Panc1 (cell line): ENCODE measurements at regions of chr7 and their contacts with region 1.

Region 1: GRCh38 chr7:155298834-155299534 is 1.3 kb downstream of the INSIG1 start:
- DNase-seq: peak; percentile 86
- ATAC-seq: peak; percentile 84
- H3K4me3 ChIP-seq: peak overlapping the region; percentile 75 to 94
- H3K27ac ChIP-seq: peak overlapping the region; percentile 85
- H3K4me1 ChIP-seq: peaks cover 25% of the 10 kb centered on the region
- H3K27me3 ChIP-seq: no peaks in the 10 kb centered on the region
- CTCF ChIP-seq: no peak

Region 2: DNA sequence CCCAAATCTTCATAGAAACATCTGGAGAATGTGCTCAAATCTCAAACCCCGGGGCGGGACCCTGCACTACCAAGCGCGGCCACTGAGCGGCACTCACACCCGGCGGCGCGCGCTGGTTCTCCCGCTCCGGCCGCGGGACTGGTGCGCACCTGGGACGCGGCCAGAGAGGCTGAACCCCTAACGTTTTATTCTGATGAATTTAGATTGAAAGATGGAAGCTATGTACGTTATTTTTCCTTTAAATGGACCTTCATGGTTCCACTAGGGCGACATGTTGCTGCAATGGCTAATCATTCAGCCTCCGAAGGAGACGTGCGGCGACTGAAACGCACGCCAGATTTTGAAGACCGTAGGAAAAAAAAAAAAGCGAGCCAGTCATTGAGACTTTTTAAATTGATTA is 108.3 kb before region 1 on chr7:
- CTCF ChIA-PET with region 1: no interaction called
- POLR2A ChIA-PET with region 1: no interaction called
- in situ Hi-C with region 1: no loop called
- intact Hi-C with region 1: loop called (anchors 5 kb)
- DNase-seq: no peak
- ATAC-seq: peak; percentile 80
- H3K4me3 ChIP-seq: peak overlapping the region; percentile 10 to 53
- H3K27ac ChIP-seq: no peak overlapping the region
- H3K4me1 ChIP-seq: no peaks in the 10 kb centered on the region
- H3K27me3 ChIP-seq: no peaks in the 10 kb centered on the region
- CTCF ChIP-seq: peak; percentile 97

Region 3: GRCh38 chr7:155227981-155228811 is 70.8 kb before region 1 on chr7:
- CTCF ChIA-PET with region 1: interaction called, 12 read pairs
- POLR2A ChIA-PET with region 1: no interaction called
- in situ Hi-C with region 1: no loop called
- intact Hi-C with region 1: no loop called
- DNase-seq: no peak
- ATAC-seq: no peak
- H3K4me3 ChIP-seq: no peak overlapping the region
- H3K27ac ChIP-seq: no peak overlapping the region
- H3K4me1 ChIP-seq: no peaks in the 10 kb centered on the region
- H3K27me3 ChIP-seq: no peaks in the 10 kb centered on the region
- CTCF ChIP-seq: no peak

Region 4: DNA sequence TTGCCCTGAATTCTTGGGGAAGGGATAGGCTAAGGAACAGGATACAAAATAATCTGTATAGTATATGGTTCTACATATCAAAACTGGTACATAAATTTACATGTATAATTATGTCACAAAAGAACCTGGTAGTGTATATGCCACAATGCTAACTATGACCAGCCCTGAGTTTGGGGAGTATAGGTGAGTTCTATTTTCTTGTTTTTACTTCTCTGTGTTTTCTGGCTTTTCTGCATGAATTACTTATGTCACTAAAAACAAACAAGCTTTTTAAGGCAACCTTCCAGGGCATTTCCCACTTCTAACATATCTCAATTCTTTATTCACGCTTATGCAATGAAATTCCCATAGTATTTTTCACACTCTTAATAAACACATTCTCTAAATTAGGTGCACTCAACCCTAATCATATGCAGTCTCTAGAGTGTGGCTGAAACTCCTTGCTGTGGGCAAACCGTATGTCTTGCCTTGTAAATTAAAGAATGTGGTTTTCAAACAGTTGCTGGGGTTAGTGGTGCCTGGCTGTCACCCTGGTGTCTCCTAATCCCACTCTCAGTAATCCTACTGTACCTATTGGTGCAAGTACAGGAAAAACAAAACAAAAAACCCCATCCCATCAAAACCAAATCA is 15.3 kb before region 1 on chr7:
- CTCF ChIA-PET with region 1: no interaction called
- POLR2A ChIA-PET with region 1: no interaction called
- in situ Hi-C with region 1: no loop called
- intact Hi-C with region 1: no loop called
- DNase-seq: no peak
- ATAC-seq: no peak
- H3K4me3 ChIP-seq: no peak overlapping the region
- H3K27ac ChIP-seq: no peak overlapping the region
- H3K4me1 ChIP-seq: no peaks in the 10 kb centered on the region
- H3K27me3 ChIP-seq: peaks cover 10% of the 10 kb centered on the region
- CTCF ChIP-seq: no peak